ENCODE measurements at regions of chr2 and their contacts with region 1.

Region 1: DNA sequence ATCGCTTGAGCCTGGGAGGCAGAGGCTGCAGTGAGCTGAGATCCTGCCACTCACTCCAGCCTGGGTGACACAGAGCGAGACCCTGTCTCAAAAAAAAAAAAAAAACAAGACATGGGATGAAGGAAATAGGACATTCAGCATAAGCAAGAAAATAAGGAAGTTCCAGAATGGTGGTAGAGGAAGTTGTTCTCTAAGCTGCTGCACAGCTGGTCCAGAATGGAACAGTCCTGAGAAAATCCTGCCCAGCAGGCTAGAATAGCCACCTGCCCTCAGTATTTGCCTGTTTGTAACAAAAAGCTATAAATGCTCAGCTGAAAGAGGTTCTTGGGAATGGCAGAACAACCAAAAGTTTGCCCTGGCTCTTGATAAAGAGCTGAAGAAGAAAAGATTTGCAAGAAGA is 11.1 kb upstream of the MAPRE3 start:
- DNase-seq: no peak
- ATAC-seq: no peak
- H3K4me3 ChIP-seq: no peak overlapping the region
- H3K27ac ChIP-seq: no peak overlapping the region
- H3K4me1 ChIP-seq: 0 out of 3 replicates have a peak, but pooled peaks cover 3% of the 10 kb centered on the region
- CTCF ChIP-seq: no peak
- EP300 ChIP-seq: no peak
- POLR2A ChIP-seq: no peak
- RAD21 ChIP-seq: no peak

Region 2: DNA sequence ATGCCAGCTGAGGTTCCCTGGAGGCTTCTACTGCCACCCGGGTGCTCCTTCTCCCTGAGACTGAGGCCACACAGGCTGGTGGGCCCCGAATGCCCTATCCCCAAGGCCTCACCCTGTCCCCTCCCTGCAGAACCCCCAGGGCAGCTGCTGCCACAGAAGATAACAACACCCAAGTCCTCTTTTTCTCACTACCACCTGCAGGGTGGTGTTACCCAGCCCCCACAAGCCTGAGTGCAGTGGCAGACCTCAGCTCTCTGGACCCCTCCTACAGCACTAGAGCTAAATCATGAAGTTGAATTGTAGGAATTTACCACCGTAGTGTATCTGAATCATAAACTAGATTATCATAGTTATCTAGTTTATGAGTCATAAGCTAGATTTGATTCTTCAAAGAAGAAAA is 180.8 kb before region 1 on chr2:
- CTCF ChIA-PET with region 1: no interaction called
- POLR2A ChIA-PET with region 1: no interaction called
- DNase-seq: no peak
- ATAC-seq: no peak; a peak in 2 of 6 replicates
- H3K4me3 ChIP-seq: no peak overlapping the region
- H3K27ac ChIP-seq: peak overlapping the region in 1 of 2 experiments; percentile 33; a peak in 1 of 6 replicates
- H3K4me1 ChIP-seq: peaks cover 12% of the 10 kb centered on the region; the same call in 1 of the 3 replicates
- CTCF ChIP-seq: no peak
- EP300 ChIP-seq: no peak
- POLR2A ChIP-seq: no peak
- RAD21 ChIP-seq: no peak

Region 3: DNA sequence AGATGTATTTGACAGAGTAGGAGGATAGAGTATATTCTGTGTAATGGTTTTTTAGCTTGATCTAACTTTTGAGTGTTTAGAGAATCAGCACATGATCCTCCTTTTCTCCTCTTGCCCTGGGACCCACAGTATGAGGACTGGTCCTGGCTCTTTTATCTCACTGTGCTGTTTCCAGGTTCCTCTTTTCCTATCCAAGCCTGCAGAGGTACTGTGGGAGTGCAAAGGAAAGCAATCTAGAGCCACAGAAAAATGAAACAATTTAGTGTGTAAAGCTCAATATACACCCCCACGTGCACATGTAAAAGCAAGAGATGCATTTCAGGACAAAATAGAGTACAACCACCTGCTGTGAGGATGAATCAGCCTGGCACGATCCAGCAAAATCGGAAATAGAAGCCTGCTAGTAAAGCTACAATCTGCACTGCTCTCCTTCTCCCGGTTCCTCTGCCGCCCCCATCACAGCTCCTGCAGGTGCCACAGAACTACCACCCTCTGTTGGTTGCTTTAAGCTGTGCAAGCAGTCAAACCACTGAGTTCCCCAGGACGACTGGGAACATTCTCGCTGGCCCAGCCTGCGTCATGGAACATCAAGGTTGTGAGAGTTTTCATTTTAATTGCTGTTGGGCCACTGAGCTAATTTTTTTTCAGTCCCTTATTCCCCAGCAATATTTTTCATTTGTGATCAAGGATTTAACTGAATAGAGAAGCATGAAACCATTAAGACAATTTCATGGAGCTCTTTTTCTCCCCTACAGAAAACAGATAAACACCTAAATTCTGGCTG is 36.7 kb before region 1 on chr2:
- CTCF ChIA-PET with region 1: interaction called, 12 read pairs
- POLR2A ChIA-PET with region 1: no interaction called
- DNase-seq: peak; percentile 68 to 93
- ATAC-seq: peak; percentile 93 to 99
- H3K4me3 ChIP-seq: no peak overlapping the region
- H3K27ac ChIP-seq: no peak overlapping the region
- H3K4me1 ChIP-seq: peaks cover 7% of the 10 kb centered on the region; the same call in 1 of the 3 replicates
- CTCF ChIP-seq: peak; percentile 65
- EP300 ChIP-seq: no peak
- POLR2A ChIP-seq: no peak
- RAD21 ChIP-seq: peak; percentile 62 to 69

Region 4: DNA sequence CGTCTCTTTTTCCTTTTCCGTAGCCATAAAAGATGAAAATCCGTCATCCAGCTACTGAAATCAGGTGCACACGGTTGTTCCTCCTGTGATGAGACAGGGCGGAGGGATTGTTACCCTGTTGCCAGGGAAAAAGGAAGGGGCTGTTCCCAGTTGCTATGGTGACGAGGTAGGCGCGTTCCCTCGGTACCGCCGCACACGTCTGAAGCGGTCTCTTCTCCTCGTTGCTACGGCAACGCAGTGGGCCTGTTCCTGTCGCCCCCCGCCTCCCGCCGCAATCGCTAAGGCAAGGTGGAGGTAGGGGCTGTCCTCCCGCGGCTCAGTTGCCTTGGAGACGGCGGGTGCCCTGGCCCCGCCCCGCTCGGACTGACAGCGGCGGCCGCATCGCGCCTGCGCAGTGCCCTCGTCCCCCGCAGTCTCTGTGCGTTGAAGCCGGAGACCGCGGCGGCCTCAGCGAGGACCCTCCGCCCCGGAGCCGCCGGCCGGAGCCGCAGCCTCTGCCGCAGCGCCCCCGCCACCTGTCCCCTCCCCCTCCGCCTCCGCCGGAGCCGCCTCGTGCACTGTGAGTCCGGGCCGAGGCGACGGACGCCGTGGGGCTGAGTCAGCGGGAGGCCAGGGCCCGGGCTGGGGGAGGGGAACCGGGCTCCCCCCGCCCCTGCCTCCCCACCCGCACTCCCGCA is 11.1 kb after region 1 on chr2 and contains the start of gene MAPRE3:
- CTCF ChIA-PET with region 1: interaction called, 53 read pairs
- POLR2A ChIA-PET with region 1: no interaction called
- DNase-seq: peak; percentile 83 to 95
- ATAC-seq: peak; percentile 89 to 95
- H3K4me3 ChIP-seq: peak within 1 kb of the TSS; percentile 93
- H3K27ac ChIP-seq: peak within 1 kb of the TSS; percentile 79 to 87
- H3K4me1 ChIP-seq: peaks cover 26% of the 10 kb centered on the region
- CTCF ChIP-seq: no peak
- EP300 ChIP-seq: no peak
- POLR2A ChIP-seq: no peak; the same call in 1 of the 2 replicates
- RAD21 ChIP-seq: no peak
- polyA plus RNA-seq, gene MAPRE3: 12.0 and 12.1 TPM in 2 replicates

Region 5: GRCh38 chr2:27024188-27024587 is 64.9 kb after region 1 on chr2:
- CTCF ChIA-PET with region 1: interaction called, 758 read pairs
- POLR2A ChIA-PET with region 1: no interaction called
- DNase-seq: peak; percentile 50 to 58
- ATAC-seq: peak; percentile 9 to 76; a peak in 3 of 6 replicates
- H3K4me3 ChIP-seq: no peak overlapping the region
- H3K27ac ChIP-seq: no peak overlapping the region
- H3K4me1 ChIP-seq: peaks cover 21% of the 10 kb centered on the region
- CTCF ChIP-seq: peak; percentile 40
- EP300 ChIP-seq: no peak
- POLR2A ChIP-seq: no peak
- RAD21 ChIP-seq: 0 out of 5 replicates have a peak, but pooled peaks of 1 of the 2 experiments have one; percentile 13

Region 6: GRCh38 chr2:27042159-27042661 is 82.9 kb after region 1 on chr2:
- CTCF ChIA-PET with region 1: interaction called, 12 read pairs
- POLR2A ChIA-PET with region 1: no interaction called
- DNase-seq: no peak
- ATAC-seq: no peak
- H3K4me3 ChIP-seq: no peak overlapping the region
- H3K27ac ChIP-seq: no peak overlapping the region
- H3K4me1 ChIP-seq: no peaks in the 10 kb centered on the region
- CTCF ChIP-seq: no peak
- EP300 ChIP-seq: no peak
- POLR2A ChIP-seq: no peak
- RAD21 ChIP-seq: no peak

Region 7: GRCh38 chr2:27059141-27059820 is 100.0 kb after region 1 on chr2:
- CTCF ChIA-PET with region 1: interaction called, 16 read pairs
- POLR2A ChIA-PET with region 1: no interaction called
- DNase-seq: no peak
- ATAC-seq: no peak
- H3K4me3 ChIP-seq: no peak overlapping the region
- H3K27ac ChIP-seq: no peak overlapping the region
- H3K4me1 ChIP-seq: peaks cover 5% of the 10 kb centered on the region; the same call in 1 of the 3 replicates
- CTCF ChIP-seq: no peak
- EP300 ChIP-seq: no peak
- POLR2A ChIP-seq: no peak
- RAD21 ChIP-seq: no peak